ENCODE measurements at regions of chr15 and their contacts with region 1.

Region 1: GRCh38 chr15:99755692-99756409 is 22.6 kb upstream of the LYSMD4 start:
- DNase-seq: peak; percentile 77
- CTCF ChIP-seq: peak; percentile 68

Region 2: DNA sequence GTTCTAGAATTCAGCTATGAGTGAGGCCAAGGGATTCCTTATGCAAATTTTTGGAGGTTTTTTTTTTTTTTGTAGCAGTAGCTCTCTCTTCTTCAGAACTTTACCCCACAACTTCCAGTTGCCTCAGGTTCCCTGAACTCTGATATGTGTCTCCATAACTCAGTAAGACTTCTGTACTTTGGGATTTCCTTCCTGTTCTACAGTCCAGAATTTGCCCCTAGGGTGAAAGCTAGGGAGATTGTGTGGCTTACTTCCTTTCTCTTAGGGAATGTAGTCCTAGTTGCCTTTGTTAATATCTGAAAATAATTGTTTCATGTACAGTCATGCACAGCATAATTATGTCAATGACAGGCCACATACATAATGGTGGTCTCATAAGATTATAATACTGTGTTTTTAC is 473.7 kb before region 1 on chr15:
- CTCF ChIA-PET with region 1: interaction called, 13 read pairs
- POLR2A ChIA-PET with region 1: no interaction called
- DNase-seq: no peak
- CTCF ChIP-seq: no peak

Region 3: DNA sequence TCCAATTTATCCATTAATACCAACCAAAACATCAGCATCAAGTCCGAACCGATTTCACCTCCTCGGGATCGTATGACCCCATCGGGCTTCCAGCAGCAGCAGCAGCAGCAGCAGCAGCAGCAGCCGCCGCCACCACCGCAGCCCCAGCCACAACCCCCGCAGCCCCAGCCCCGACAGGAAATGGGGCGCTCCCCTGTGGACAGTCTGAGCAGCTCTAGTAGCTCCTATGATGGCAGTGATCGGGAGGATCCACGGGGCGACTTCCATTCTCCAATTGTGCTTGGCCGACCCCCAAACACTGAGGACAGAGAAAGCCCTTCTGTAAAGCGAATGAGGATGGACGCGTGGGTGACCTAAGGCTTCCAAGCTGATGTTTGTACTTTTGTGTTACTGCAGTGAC is 43.4 kb before region 1 on chr15:
- CTCF ChIA-PET with region 1: interaction called, 10 read pairs
- POLR2A ChIA-PET with region 1: no interaction called
- DNase-seq: no peak
- CTCF ChIP-seq: no peak

Region 4: DNA sequence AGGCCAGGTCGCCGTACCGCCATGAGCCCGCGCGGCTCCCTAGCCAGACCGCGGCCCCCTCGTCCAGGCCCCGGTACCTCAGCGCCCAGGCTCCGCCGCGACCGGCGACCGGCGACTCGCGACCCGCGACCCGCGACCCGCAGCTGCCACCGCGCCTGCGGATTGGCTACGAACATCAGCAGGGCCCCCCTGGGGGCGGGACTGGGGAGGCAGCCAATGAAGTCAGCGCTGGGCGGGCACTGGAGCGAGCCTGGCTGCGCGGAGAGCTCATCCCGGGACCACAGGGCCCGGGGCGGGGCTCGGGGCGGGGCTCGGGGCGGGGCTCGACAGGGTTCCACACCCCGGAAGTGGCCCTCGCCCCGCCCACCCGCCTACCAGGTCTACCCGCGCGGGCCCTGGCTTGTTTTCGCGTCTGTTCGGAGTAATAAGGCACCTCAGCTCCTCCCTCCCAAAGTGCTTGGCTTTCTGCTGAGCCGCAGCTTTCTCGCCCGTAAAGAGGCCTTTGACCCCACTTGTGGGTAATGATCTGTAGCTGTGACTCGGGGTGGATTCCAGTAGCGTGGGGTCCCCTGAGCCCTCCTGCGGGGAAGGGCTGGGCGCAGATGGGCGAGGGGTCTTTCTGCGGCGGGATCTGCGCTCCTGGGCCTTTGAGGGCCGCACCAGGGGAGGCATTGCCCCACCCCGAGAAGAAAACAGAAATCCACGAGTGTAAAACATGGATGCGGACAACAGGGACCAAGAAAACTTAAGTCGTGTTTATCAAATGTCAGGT is 22.4 kb before region 1 on chr15 and contains the start of gene LYSMD4:
- CTCF ChIA-PET with region 1: interaction called, 83 read pairs
- POLR2A ChIA-PET with region 1: no interaction called
- DNase-seq: peak; percentile 100
- CTCF ChIP-seq: no peak

Region 5: DNA sequence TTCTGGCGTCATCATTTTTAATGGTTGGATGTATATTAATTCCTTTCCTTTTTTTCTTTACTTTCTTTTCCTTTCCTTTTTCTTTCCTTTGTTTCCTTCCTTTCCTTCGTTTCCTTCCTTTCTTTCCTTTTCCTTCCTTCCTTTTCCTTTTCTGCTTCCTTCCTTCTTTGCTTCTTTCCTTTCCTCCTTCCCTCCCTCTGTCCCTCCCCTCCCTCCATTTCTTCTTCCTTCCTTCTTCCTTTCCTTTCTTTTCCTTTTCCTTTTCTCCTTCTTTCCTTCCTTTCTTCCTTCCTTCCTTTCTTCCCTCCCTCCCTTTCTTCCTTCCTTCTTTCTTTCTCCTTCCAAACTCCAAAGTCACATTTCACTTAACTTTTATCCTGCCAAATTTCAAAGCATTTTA is 32.3 kb after region 1 on chr15:
- CTCF ChIA-PET with region 1: no interaction called
- POLR2A ChIA-PET with region 1: no interaction called
- DNase-seq: no peak
- CTCF ChIP-seq: no peak

Measured in GM10248 (cell line).